PC-9 (cell line): ENCODE measurements at regions of chr14 and their contacts with region 1.

Region 1: DNA sequence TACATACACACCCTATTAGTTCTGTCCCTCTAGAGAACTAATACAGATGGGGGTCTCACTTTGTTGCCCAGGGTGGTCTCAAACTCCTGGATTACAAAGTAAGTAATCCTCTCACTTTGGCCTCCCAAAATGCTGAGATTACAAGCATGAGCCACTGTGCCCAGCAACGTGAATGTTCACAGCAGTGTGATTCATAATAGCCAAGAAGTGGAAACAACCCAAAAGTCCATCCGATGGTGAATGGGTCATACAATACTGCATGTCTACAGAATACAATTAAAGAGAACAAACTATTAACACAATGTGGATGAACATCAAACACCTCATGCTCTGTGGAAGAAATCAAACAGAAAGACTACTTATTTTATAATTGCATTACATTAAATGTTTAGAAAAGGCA is 57.3 kb upstream of the SYNE2 start:
- DNase-seq: no peak
- H3K4me3 ChIP-seq: no peak overlapping the region
- H3K27ac ChIP-seq: no peak overlapping the region
- H3K4me1 ChIP-seq: 0 out of 2 replicates have a peak, but pooled peaks cover 4% of the 10 kb centered on the region
- H3K27me3 ChIP-seq: no peaks in the 10 kb centered on the region
- CTCF ChIP-seq: no peak

Region 2: DNA sequence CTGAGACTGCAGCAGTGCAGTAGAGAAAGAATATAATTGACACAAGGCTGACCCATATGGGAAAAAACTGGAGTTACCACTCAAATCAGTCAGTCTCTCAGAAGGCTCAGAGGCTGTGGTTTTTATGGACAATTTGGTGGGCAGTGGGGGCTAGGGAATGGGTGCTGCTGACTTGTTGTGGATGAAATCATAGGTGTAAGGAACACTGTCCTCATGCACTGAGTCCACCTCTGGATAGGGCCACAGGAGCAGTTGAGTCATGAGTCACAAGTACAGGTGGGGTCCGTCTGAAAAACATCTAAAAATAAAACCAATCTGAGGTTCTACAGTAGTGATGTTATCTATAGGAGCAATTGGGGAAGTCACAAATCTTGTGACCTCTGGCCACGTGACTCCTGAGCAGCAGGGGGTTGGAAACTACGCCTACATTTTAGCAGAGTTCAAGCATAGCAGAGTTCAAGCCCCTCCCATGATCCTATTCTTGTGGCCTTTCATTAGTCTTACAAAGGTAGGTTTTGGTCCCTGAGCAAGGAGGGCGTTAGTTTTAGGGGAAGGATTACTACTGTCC is 49.6 kb before region 1 on chr14:
- CTCF ChIA-PET with region 1: no interaction called
- POLR2A ChIA-PET with region 1: no interaction called
- intact Hi-C with region 1: no loop called
- DNase-seq: no peak
- H3K4me3 ChIP-seq: no peak overlapping the region
- H3K27ac ChIP-seq: no peak overlapping the region
- H3K4me1 ChIP-seq: peaks cover 12% of the 10 kb centered on the region
- H3K27me3 ChIP-seq: no peaks in the 10 kb centered on the region
- CTCF ChIP-seq: no peak

Region 3: GRCh38 chr14:63993992-63994391 is 198.5 kb after region 1 on chr14:
- CTCF ChIA-PET with region 1: no interaction called
- POLR2A ChIA-PET with region 1: no interaction called
- intact Hi-C with region 1: loop called (anchors 5 kb)
- DNase-seq: no peak
- H3K4me3 ChIP-seq: no peak overlapping the region
- H3K27ac ChIP-seq: no peak overlapping the region
- H3K4me1 ChIP-seq: no peaks in the 10 kb centered on the region
- H3K27me3 ChIP-seq: no peaks in the 10 kb centered on the region
- CTCF ChIP-seq: peak; percentile 55; the same call in 1 of the 2 replicates

Region 4: GRCh38 chr14:64012720-64013119 is 217.2 kb after region 1 on chr14:
- CTCF ChIA-PET with region 1: interaction called, 4 read pairs
- POLR2A ChIA-PET with region 1: no interaction called
- intact Hi-C with region 1: loop called (anchors 5 kb)
- DNase-seq: no peak
- H3K4me3 ChIP-seq: no peak overlapping the region
- H3K27ac ChIP-seq: no peak overlapping the region
- H3K4me1 ChIP-seq: no peaks in the 10 kb centered on the region
- H3K27me3 ChIP-seq: no peaks in the 10 kb centered on the region
- CTCF ChIP-seq: no peak

Region 5: DNA sequence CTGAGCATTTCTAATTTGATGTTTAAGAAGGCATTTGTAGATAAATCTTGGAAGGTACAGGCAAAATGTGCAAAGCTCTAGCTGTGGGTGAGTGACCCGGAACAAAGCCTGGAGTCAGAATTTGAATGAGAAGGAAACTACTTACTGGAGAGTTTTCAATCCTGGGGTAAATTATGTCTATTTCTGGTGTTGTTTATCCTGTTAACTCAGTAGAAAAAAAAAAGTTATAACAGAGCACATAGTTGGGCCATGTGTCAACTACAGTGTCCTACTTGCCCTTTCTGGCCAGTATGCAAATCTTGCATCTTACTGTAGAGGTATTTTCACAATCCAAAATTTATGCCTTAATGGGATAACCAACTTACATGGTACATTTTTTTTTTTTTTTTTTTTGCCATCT is 239.6 kb after region 1 on chr14:
- CTCF ChIA-PET with region 1: no interaction called
- POLR2A ChIA-PET with region 1: no interaction called
- intact Hi-C with region 1: no loop called
- DNase-seq: no peak
- H3K4me3 ChIP-seq: no peak overlapping the region
- H3K27ac ChIP-seq: no peak overlapping the region
- H3K4me1 ChIP-seq: no peaks in the 10 kb centered on the region
- H3K27me3 ChIP-seq: no peaks in the 10 kb centered on the region
- CTCF ChIP-seq: no peak

Region 6: GRCh38 chr14:64137657-64138290 is 342.2 kb after region 1 on chr14:
- CTCF ChIA-PET with region 1: no interaction called
- POLR2A ChIA-PET with region 1: no interaction called
- intact Hi-C with region 1: loop called (anchors 10 kb)
- DNase-seq: no peak
- H3K4me3 ChIP-seq: no peak overlapping the region
- H3K27ac ChIP-seq: no peak overlapping the region
- H3K4me1 ChIP-seq: no peaks in the 10 kb centered on the region
- H3K27me3 ChIP-seq: no peaks in the 10 kb centered on the region
- CTCF ChIP-seq: no peak; the same call in 1 of the 2 replicates